CD4-positive, alpha-beta memory T cell (primary cell): ENCODE measurements at regions of chr9 and their contacts with region 1.

Region 1: GRCh38 chr9:19379697-19380046 is 364 bp downstream of the RPS6 start:
- DNase-seq: peak in 1 of 5 donors; percentile 63
- H3K4me3 ChIP-seq: peak overlapping the region; percentile 64 to 71
- H3K4me3 Mint-ChIP-seq: peak overlapping the region; percentile 97 to 99 (median 98)
- H3K27ac ChIP-seq: peak overlapping the region; percentile 83
- H3K27ac Mint-ChIP-seq: peak overlapping the region; percentile 96 to 100 (median 99)
- H3K4me1 ChIP-seq: peaks cover 36% of the 10 kb centered on the region
- H3K4me1 Mint-ChIP-seq: peaks cover 36 to 44% (median 40%) of the 10 kb centered on the region in 4 donors
- H3K27me3 ChIP-seq: no peaks in the 10 kb centered on the region
- H3K27me3 Mint-ChIP-seq: no peaks in the 10 kb centered on the region

Region 2: DNA sequence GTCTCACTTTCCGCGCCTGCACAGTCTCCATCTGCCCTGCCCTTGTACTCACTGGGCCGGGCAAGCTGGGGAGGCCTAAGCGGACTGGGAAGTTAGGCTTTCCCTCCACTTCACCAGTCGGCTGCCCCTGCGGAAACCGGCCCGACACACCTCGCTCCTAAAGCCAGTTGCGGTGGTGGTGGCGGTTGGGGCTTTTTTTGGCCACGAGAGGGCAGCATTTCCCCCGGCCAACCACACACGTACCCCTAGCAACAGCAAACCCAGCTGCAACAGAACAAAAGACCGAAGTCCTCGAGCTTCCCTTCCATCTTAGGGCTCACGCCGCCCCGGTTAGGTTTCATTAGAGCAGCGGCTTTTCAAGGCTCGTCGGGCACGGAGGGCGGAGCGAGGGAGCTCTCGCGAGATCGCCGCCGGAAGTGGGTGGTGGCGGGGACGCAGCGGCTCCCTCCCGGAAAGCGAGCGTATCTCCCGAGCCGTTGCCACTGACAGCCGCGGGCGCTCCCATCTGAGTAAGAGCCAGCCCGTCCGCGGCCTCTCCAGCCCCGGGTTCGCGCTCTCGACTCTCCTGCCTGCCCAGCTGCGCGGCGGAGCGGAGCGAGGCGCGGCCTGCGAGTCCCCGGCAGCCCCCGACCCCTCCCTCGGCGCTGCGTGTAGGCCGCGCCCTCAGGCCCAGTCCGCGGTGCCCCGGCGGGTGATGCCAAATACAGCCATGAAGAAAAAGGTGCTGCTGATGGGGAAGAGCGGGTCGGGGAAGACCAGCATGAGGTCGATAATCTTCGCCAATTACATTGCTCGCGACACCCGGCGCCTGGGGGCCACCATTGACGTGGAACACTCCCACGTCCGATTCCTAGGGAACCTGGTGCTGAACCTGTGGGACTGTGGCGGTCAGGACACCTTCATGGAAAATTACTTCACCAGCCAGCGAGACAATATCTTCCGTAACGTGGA is 330.4 kb before region 1 on chr9 and contains the start of gene RRAGA:
- CTCF ChIA-PET with region 1: interaction called, 3 read pairs
- POLR2A ChIA-PET with region 1: interaction called, 30 read pairs
- intact Hi-C with region 1: loop called (anchors 1 kb)
- DNase-seq: peak; percentile 94 to 96 (median 95)
- H3K4me3 ChIP-seq: peak within 1 kb of the TSS; percentile 84 to 96
- H3K4me3 Mint-ChIP-seq: peak within 1 kb of the TSS; percentile 91 to 99 (median 96)
- H3K27ac ChIP-seq: peak within 1 kb of the TSS; percentile 87
- H3K27ac Mint-ChIP-seq: peak within 1 kb of the TSS; percentile 96 to 100 (median 99)
- H3K4me1 ChIP-seq: peaks cover 39% of the 10 kb centered on the region
- H3K4me1 Mint-ChIP-seq: peaks cover 21 to 56% (median 40%) of the 10 kb centered on the region in 4 donors
- H3K27me3 ChIP-seq: no peaks in the 10 kb centered on the region
- H3K27me3 Mint-ChIP-seq: no peaks in the 10 kb centered on the region
- total RNA-seq, gene RRAGA: 57.4 to 58.0 TPM

Region 3: GRCh38 chr9:19102631-19103345 is 276.9 kb before region 1 on chr9 and contains the start of gene HAUS6:
- CTCF ChIA-PET with region 1: no interaction called
- POLR2A ChIA-PET with region 1: interaction called, 6 read pairs
- intact Hi-C with region 1: loop called (anchors 1 kb)
- DNase-seq: peak; percentile 93 to 98 (median 96)
- H3K4me3 ChIP-seq: peak within 1 kb of the TSS; percentile 73 to 74
- H3K4me3 Mint-ChIP-seq: peak within 1 kb of the TSS; percentile 91 to 98 (median 98)
- H3K27ac ChIP-seq: peak within 1 kb of the TSS; percentile 74
- H3K27ac Mint-ChIP-seq: peak within 1 kb of the TSS; percentile 91 to 98 (median 96)
- H3K4me1 ChIP-seq: peaks cover 28% of the 10 kb centered on the region
- H3K4me1 Mint-ChIP-seq: peaks cover 15 to 39% (median 20%) of the 10 kb centered on the region in 4 donors
- H3K27me3 ChIP-seq: no peaks in the 10 kb centered on the region
- H3K27me3 Mint-ChIP-seq: no peaks in the 10 kb centered on the region
- total RNA-seq, gene HAUS6: 19.4 to 20.9 TPM

Region 4: DNA sequence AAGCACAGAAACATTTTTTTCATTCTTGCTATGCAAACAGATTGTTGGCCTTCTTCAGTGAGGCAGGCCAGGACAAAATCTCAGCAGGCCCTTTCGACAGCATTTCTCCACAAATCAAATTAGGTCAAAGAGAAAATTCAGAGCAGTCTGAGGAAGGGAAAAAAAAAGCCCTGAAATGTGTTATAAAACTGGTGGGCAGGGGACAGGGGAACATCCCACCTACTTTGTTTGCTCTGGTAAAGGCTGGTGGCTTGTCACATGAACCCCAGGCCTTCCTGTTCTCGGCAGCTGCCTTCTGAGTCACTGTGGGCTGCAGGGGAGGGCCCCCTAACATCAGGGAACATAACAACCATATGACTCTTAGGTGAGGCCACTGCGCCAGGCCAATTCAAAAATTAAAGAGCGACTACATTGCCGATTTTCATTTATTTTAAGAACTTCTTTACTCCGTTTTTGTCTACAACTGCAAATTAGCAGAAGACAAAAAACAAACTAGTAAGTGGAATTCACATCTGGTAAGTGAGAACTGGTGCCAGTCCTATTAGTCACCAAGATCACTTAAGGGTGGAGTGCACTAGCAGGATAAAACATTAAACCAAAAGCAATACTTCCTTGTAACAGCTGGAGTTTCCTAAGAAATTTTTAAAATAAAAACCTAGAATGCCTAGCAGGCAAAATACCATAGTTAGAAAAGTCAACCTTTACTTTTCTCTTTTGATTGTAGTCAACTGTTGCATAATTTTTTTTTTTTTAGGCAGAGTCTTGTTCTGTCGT is 195.3 kb before region 1 on chr9:
- CTCF ChIA-PET with region 1: no interaction called
- POLR2A ChIA-PET with region 1: interaction called, 6 read pairs
- intact Hi-C with region 1: loop called (anchors 5 kb)
- DNase-seq: peak; percentile 57 to 90 (median 73)
- H3K4me3 ChIP-seq: no peak overlapping the region
- H3K4me3 Mint-ChIP-seq: peak overlapping the region in 7 of 8 donors; percentile 26 to 73 (median 51)
- H3K27ac ChIP-seq: peak overlapping the region; percentile 60
- H3K27ac Mint-ChIP-seq: peak overlapping the region; percentile 89 to 97 (median 95)
- H3K4me1 ChIP-seq: peaks cover 22% of the 10 kb centered on the region
- H3K4me1 Mint-ChIP-seq: peaks cover 9 to 20% (median 15%) of the 10 kb centered on the region in 4 donors
- H3K27me3 ChIP-seq: no peaks in the 10 kb centered on the region
- H3K27me3 Mint-ChIP-seq: no peaks in the 10 kb centered on the region

Region 5: GRCh38 chr9:19320495-19320894 is 59.2 kb before region 1 on chr9:
- CTCF ChIA-PET with region 1: no interaction called
- POLR2A ChIA-PET with region 1: no interaction called
- intact Hi-C with region 1: loop called (anchors 10 kb)
- DNase-seq: no peak
- H3K4me3 ChIP-seq: no peak overlapping the region
- H3K4me3 Mint-ChIP-seq: no peak overlapping the region
- H3K27ac ChIP-seq: no peak overlapping the region
- H3K27ac Mint-ChIP-seq: no peak overlapping the region
- H3K4me1 ChIP-seq: no peaks in the 10 kb centered on the region
- H3K4me1 Mint-ChIP-seq: peaks cover 0 to 15% (median 7%) of the 10 kb centered on the region in 4 donors
- H3K27me3 ChIP-seq: no peaks in the 10 kb centered on the region
- H3K27me3 Mint-ChIP-seq: no peaks in the 10 kb centered on the region

Region 6: GRCh38 chr9:19358701-19359100 is 21.0 kb before region 1 on chr9:
- CTCF ChIA-PET with region 1: interaction called, 3 read pairs
- POLR2A ChIA-PET with region 1: interaction called, 10 read pairs
- intact Hi-C with region 1: no loop called
- DNase-seq: no peak
- H3K4me3 ChIP-seq: no peak overlapping the region
- H3K4me3 Mint-ChIP-seq: no peak overlapping the region
- H3K27ac ChIP-seq: no peak overlapping the region
- H3K27ac Mint-ChIP-seq: peak overlapping the region in 4 of 7 donors; percentile 1 to 44 (median 38)
- H3K4me1 ChIP-seq: no peaks in the 10 kb centered on the region
- H3K4me1 Mint-ChIP-seq: peaks cover 0 to 1% (median 0%) of the 10 kb centered on the region in 4 donors
- H3K27me3 ChIP-seq: no peaks in the 10 kb centered on the region
- H3K27me3 Mint-ChIP-seq: no peaks in the 10 kb centered on the region

Region 7: DNA sequence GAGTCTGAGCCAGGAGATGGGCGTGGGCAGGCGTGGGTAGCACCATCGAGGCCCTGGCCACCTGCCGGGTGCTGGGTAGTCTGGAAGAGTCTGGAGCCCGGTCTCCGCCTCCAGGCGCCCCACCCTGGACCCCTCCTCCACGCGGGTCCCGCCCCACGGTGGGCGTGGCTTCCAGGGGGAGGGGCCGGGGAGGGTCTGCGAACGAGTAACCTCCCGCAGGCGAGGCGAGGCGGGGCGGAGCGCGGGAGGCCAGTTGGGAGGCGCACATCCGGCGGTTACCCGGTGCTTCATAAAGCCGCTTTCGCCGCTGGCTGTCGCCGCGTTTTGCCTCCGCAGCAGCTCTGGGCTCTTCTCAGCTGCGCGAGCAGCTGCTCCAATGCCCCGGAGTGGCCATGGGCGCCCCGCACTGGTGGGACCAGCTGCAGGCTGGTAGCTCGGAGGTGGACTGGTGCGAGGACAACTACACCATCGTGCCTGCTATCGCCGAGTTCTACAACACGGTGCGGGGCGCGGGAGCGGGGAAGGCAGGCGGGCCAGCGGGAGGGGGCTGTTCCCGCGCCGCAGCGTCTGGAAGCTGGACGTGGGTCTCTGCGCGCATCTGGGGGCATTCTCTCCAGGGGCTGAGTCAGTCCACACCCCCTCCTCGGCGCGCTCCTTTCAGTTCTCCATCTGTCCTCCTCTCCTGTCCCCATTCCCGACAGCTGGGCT is 29.2 kb after region 1 on chr9 and contains the start of gene ACER2:
- CTCF ChIA-PET with region 1: no interaction called
- POLR2A ChIA-PET with region 1: interaction called, 39 read pairs
- intact Hi-C with region 1: loop called (anchors 1 kb)
- DNase-seq: peak; percentile 91 to 97 (median 93)
- H3K4me3 ChIP-seq: peak within 1 kb of the TSS; percentile 94 to 100
- H3K4me3 Mint-ChIP-seq: peak within 1 kb of the TSS; percentile 91 to 96 (median 96)
- H3K27ac ChIP-seq: peak within 1 kb of the TSS; percentile 69
- H3K27ac Mint-ChIP-seq: peak within 1 kb of the TSS; percentile 65 to 94 (median 90)
- H3K4me1 ChIP-seq: peaks cover 23% of the 10 kb centered on the region
- H3K4me1 Mint-ChIP-seq: peaks cover 5 to 24% (median 16%) of the 10 kb centered on the region in 4 donors
- H3K27me3 ChIP-seq: no peaks in the 10 kb centered on the region
- H3K27me3 Mint-ChIP-seq: no peaks in the 10 kb centered on the region
- total RNA-seq, gene ACER2: 5.9 to 6.0 TPM